Activated T-helper 1 cell treated with anti-CD3 and anti-CD28 coated beads, Interleukin-12 subunit alpha, Interleukin-12 subunit beta, Interleukin-2, Interleukin-4 antibody, amounts not matched to agents 30 ng/mL and 10 ng/mL and 1 ng/mL, durations not matched to agents 14 hours and 24 hours and 36 hours (primary cell): ENCODE measurements at regions of chr15 and their contacts with region 1.

Region 1: GRCh38 chr15:45037936-45038335 is 14.9 kb downstream of the SORD start:
- DNase-seq: no peak
- H3K4me3 Mint-ChIP-seq: no peak overlapping the region
- H3K27ac Mint-ChIP-seq: no peak overlapping the region
- H3K4me1 Mint-ChIP-seq: peaks cover 11% of the 10 kb centered on the region
- H3K27me3 Mint-ChIP-seq: no peaks in the 10 kb centered on the region

Region 2: GRCh38 chr15:44584162-44584749 is 453.7 kb before region 1 on chr15:
- intact Hi-C with region 1: loop called (anchors 2 kb)
- DNase-seq: peak; percentile 37
- H3K4me3 Mint-ChIP-seq: no peak overlapping the region
- H3K27ac Mint-ChIP-seq: no peak overlapping the region
- H3K4me1 Mint-ChIP-seq: peaks cover 9% of the 10 kb centered on the region
- H3K27me3 Mint-ChIP-seq: no peaks in the 10 kb centered on the region

Region 3: GRCh38 chr15:44968475-44968874 is 69.5 kb before region 1 on chr15:
- intact Hi-C with region 1: loop called (anchors 1 kb)
- DNase-seq: no peak
- H3K4me3 Mint-ChIP-seq: no peak overlapping the region
- H3K27ac Mint-ChIP-seq: no peak overlapping the region
- H3K4me1 Mint-ChIP-seq: no peaks in the 10 kb centered on the region
- H3K27me3 Mint-ChIP-seq: peaks cover 6% of the 10 kb centered on the region

Region 4: DNA sequence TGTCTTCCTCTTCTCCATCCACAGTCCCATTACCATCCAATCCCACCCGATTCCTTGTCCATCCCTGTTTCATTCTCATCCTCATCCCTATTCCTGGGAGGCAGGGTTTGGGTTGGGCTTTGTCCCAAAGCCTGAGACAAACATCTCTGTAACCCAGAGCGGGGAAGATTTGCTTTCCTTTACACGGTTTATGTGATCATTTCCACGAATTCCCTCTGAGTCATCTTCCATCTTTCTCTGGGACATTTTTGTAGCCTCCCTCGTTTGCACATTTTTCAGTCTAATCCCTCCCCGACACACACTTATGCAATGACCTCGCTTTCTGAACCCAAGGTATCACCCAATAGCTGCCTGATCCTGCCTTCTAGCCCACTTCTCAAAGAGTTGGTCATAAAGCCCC is 53.2 kb after region 1 on chr15:
- intact Hi-C with region 1: no loop called
- DNase-seq: no peak
- H3K4me3 Mint-ChIP-seq: no peak overlapping the region
- H3K27ac Mint-ChIP-seq: no peak overlapping the region
- H3K4me1 Mint-ChIP-seq: no peaks in the 10 kb centered on the region
- H3K27me3 Mint-ChIP-seq: peaks cover 29% of the 10 kb centered on the region